K562 (cell line): ENCODE measurements at regions of chr10 and their contacts with region 1.

Region 1: DNA sequence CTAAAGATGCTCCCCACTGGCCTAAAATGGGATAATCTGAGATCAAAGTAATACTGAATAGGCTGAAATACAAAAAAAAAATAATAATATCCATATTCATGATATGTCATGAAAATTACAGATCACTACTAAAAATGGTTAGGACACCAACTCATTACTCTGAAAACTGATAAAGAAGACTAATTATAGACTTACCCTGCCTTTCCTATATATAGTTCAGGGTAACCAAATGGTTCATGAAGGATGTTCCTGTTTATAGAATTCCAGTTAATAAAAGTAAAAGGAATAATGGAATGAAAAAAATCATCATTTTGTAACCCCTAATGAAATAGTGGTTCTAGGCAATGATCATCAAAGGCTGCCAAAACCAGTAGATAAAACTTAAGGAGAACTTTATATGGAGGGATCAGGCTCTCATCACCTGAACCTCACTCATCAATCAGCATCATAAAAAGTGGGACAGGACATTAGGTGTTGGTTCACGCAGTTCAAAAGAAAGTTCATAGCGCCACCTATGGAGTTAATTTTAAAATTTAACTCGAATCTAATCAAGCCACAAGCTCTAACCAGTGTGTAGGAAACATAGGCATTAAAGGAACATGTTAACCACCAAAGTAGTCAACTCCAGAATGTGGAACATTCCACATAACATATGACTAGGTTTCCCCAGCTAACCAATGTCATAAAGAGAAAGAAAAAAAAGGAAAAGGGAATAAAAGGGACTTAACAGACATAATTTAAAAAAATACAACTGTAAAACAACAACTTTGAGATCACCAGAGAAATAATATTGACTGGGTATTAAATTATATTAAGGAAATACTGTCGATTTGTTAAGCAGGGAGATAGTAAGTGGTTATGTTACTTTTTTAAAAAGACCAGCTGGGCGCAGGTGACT is 35.7 kb downstream of the P4HA1 start:
- DNase-seq: peak; percentile 33 to 56 (median 44)
- ATAC-seq: peak; percentile 90
- H3K4me3 ChIP-seq: no peak overlapping the region
- H3K27ac ChIP-seq: no peak overlapping the region
- H3K4me1 ChIP-seq: no peaks in the 10 kb centered on the region
- H3K27me3 ChIP-seq: no peaks in the 10 kb centered on the region
- CTCF ChIP-seq: peak; percentile 47 to 64 (median 48)
- EP300 ChIP-seq: no peak
- POLR2A ChIP-seq: no peak
- RAD21 ChIP-seq: peak; percentile 24 to 82; a peak in 3 of 4 replicates

Region 2: DNA sequence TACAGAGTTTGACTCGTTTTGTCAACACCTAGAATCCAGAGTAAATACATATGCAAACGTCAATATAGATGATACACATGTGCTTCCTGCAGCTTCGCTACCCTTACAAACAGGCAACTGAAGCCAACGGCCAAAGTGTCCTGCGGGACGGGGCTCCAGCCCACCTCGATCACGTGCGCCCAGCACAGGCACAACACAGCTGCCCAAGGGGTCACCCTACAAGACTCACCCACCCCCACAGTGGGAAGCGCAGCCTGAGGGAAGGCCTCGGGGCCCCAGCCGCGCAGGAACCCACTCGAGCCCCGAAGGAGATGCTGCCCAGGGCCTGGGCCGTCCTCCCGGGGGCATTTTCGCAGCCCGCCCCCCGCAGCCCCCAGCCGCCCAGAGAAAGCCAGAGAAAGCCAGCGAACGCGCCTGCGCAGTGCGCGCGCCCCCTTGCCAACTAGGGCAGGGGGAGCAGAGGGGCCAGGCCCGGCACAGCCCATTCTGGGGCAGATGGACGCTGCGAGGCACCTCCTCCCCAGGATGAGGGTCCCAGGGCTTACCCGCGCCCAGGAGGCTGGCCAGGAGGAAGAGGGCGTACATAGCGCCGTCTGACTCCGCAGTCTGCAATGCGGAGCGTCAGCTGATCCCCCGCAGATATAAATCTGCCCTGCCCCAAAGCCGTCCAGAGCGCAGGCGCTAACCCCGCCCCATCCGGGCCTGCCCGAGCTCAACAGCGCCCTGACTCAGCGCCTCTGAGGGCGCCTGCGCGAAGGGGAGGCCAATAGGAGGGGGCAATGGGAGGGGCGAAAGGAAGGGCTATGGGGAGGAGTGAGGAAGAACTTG is 1210.1 kb before region 1 on chr10 and contains the start of gene PSAP:
- CTCF ChIA-PET with region 1: no interaction called
- POLR2A ChIA-PET with region 1: no interaction called
- in situ Hi-C with region 1: no loop called
- intact Hi-C with region 1: no loop called
- DNase-seq: peak; percentile 100
- ATAC-seq: peak; percentile 96
- H3K4me3 ChIP-seq: peak within 1 kb of the TSS; percentile 69
- H3K27ac ChIP-seq: peak within 1 kb of the TSS; percentile 86
- H3K4me1 ChIP-seq: peaks cover 46% of the 10 kb centered on the region in 2 experiments
- H3K27me3 ChIP-seq: no peaks in the 10 kb centered on the region
- CTCF ChIP-seq: no peak
- EP300 ChIP-seq: peak; percentile 55; the same call in 1 of the 2 replicates
- POLR2A ChIP-seq: peak; percentile 97
- RAD21 ChIP-seq: no peak; a peak in 1 of 4 replicates
- polyA plus RNA-seq, gene PSAP: 429 to 700 TPM

Region 3: DNA sequence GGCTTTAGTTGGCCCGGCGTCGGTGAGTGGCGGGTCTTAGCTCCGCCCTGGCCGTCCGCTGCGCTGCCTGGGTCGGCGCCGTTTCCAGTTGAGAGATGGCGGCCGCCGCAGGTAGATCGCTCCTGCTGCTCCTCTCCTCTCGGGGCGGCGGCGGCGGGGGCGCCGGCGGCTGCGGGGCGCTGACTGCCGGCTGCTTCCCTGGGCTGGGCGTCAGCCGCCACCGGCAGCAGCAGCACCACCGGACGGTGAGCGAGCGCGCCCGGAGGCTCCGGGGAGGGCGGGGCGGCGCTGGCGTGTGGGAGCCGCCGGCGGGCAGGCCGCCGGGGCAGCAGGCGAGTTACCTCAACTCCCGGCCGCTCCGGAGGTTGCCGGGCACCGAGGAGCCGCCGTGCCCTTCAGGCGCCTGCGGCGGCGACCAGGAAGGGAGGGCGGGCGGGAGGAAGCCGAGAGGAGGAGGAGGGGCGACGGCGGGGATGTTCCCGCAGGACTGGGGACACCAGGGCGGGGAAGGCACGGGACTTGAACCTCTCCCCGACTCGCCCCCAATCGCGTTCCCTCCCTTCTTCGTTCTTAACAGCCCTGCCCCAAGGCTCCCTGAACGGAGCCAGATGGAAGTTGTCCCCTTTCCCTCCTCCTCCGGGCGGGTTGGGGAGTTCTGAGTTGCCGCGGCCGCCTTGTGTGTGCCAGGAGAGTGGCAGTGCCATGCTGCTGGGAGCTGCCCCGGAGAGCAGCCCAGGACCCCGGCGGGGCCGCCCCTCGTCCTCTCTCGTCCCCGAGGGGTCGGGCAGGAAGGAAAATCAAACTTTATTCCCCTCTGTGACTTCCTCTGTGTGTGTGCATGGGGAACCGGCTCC is 368.7 kb before region 1 on chr10 and contains the start of gene MCU:
- CTCF ChIA-PET with region 1: no interaction called
- POLR2A ChIA-PET with region 1: no interaction called
- in situ Hi-C with region 1: no loop called
- intact Hi-C with region 1: loop called (anchors 10 kb)
- DNase-seq: peak; percentile 95 to 98 (median 96)
- ATAC-seq: peak; percentile 98
- H3K4me3 ChIP-seq: peak within 1 kb of the TSS; percentile 71
- H3K27ac ChIP-seq: peak within 1 kb of the TSS; percentile 72
- H3K4me1 ChIP-seq: peaks cover 25 to 44% of the 10 kb centered on the region in 2 experiments
- H3K27me3 ChIP-seq: no peaks in the 10 kb centered on the region
- CTCF ChIP-seq: no peak
- EP300 ChIP-seq: no peak
- POLR2A ChIP-seq: peak; percentile 86
- RAD21 ChIP-seq: peak in 1 of 2 experiments; percentile 24; a peak in 1 of 4 replicates
- polyA plus RNA-seq, gene MCU: 8.2 to 11.1 TPM

Region 4: GRCh38 chr10:72904806-72905205 is 156.2 kb before region 1 on chr10:
- CTCF ChIA-PET with region 1: no interaction called
- POLR2A ChIA-PET with region 1: no interaction called
- in situ Hi-C with region 1: no loop called
- intact Hi-C with region 1: loop called (anchors 10 kb)
- DNase-seq: no peak
- ATAC-seq: no peak
- H3K4me3 ChIP-seq: no peak overlapping the region
- H3K27ac ChIP-seq: no peak overlapping the region
- H3K4me1 ChIP-seq: peaks cover 3 to 9% of the 10 kb centered on the region in 2 experiments; a peak in 3 of 5 replicates
- H3K27me3 ChIP-seq: no peaks in the 10 kb centered on the region
- CTCF ChIP-seq: no peak
- EP300 ChIP-seq: no peak
- POLR2A ChIP-seq: no peak
- RAD21 ChIP-seq: no peak

Region 5: GRCh38 chr10:73021050-73021449 is 39.9 kb before region 1 on chr10:
- CTCF ChIA-PET with region 1: no interaction called
- POLR2A ChIA-PET with region 1: interaction called, 3 read pairs
- in situ Hi-C with region 1: loop called (anchors 5 kb)
- intact Hi-C with region 1: no loop called
- DNase-seq: no peak
- ATAC-seq: no peak
- H3K4me3 ChIP-seq: no peak overlapping the region
- H3K27ac ChIP-seq: no peak overlapping the region
- H3K4me1 ChIP-seq: no peaks in the 10 kb centered on the region; a peak in 1 of 5 replicates
- H3K27me3 ChIP-seq: no peaks in the 10 kb centered on the region
- CTCF ChIP-seq: no peak
- EP300 ChIP-seq: no peak
- POLR2A ChIP-seq: no peak
- RAD21 ChIP-seq: no peak

Region 6: DNA sequence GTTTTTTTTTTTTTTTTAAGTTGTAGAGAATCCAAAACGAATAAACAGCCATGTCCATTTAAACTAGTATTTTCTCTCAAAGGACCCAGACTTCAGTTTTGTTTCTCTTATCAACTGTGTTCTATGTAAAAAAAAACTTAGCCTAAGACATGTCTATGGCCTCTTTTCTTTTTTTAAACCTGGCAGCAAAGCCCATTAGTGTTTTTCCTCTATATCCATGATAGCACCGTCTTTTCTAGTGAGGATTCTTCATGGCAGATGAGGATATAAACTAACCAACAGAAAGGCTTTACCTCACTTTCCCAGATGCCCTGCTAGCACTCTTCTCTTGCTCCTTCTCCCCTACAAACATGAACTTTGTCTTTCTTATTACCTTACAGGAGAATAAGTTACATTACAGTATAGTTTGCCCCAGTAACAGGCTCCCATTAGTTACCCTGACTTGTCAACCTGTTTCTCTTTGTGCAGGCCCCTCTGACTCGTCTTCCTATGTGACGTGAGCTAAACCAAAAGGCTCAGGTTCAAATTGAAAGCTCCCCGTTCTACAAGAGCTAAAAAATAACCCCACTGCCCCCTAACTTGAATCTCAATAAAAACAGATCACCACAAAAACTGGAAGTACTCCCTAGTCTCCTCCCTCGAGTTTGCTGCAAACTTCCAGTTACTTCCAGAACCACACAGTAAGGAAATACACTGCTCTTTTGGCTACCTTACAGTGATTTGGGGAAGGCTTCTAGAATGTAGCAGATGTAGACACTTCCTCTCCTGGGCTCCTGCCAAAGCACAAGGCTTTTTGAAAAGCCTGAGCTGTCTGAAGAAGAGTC is 15.6 kb after region 1 on chr10:
- CTCF ChIA-PET with region 1: no interaction called
- POLR2A ChIA-PET with region 1: interaction called, 13 read pairs
- in situ Hi-C with region 1: no loop called
- intact Hi-C with region 1: no loop called
- DNase-seq: no peak
- ATAC-seq: peak; percentile 65
- H3K4me3 ChIP-seq: no peak overlapping the region
- H3K27ac ChIP-seq: peak overlapping the region; percentile 17; the same call in 2 of the 3 replicates
- H3K4me1 ChIP-seq: peaks cover under 1 to 12% of the 10 kb centered on the region in 2 experiments; a peak in 3 of 5 replicates
- H3K27me3 ChIP-seq: no peaks in the 10 kb centered on the region
- CTCF ChIP-seq: no peak
- EP300 ChIP-seq: no peak
- POLR2A ChIP-seq: no peak
- RAD21 ChIP-seq: no peak